Activated CD8-positive, alpha-beta T cell treated with anti-CD3 and anti-CD28 coated beads for 36 hours (primary cell): ENCODE measurements at regions of chr2 and their contacts with region 1.

Region 1: DNA sequence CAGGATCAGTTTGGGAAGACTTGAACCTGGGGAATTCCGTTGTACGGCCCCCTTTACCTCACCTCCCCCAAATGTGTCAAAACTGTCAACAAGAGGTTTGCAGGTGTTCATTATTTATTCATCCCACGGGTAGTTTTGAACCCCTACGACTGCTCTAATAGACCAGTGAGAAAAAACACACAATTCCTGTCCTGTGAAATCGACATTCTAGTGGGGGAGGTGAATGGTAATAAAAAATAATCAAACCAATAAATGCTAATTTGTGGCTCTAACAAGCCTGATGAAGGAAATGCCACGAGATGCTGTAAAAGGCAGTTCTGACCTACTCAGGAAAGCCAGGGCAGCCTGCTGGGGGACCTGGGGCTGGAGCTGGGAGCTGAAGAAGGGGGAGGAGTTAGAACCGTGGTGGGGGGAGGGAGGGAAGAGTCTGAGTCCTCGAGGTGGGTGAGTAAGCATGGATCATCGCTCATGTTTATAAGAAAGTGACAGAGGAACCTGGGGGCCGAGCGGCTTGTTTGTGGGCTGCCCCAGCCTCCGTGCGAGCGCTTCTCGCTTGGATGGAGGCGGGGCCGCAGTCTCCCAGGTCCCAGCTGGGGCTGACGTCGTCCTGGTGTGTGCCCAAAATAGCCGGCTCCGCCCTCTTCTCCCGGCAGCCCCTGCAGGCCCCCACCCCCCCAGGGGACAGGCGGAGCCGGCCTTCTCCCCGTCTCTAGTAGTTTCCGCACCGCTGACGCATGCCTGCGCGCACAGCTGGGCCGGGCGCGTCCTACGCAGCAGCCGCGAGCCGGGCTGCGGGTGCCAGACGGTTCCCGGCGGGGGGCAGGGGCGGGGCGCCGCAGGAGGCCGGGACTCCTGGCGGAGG is at the start of gene DNAJB2:
- DNase-seq: peak; percentile 100
- ATAC-seq: peak; percentile 86
- H3K4me3 Mint-ChIP-seq: peak within 1 kb of the TSS; percentile 80
- H3K27ac Mint-ChIP-seq: peak within 1 kb of the TSS; percentile 95
- H3K4me1 Mint-ChIP-seq: peaks cover 45% of the 10 kb centered on the region
- H3K27me3 Mint-ChIP-seq: no peaks in the 10 kb centered on the region
- CTCF ChIP-seq: no peak
- total RNA-seq, gene DNAJB2: 61.8 to 63.3 TPM

Region 2: DNA sequence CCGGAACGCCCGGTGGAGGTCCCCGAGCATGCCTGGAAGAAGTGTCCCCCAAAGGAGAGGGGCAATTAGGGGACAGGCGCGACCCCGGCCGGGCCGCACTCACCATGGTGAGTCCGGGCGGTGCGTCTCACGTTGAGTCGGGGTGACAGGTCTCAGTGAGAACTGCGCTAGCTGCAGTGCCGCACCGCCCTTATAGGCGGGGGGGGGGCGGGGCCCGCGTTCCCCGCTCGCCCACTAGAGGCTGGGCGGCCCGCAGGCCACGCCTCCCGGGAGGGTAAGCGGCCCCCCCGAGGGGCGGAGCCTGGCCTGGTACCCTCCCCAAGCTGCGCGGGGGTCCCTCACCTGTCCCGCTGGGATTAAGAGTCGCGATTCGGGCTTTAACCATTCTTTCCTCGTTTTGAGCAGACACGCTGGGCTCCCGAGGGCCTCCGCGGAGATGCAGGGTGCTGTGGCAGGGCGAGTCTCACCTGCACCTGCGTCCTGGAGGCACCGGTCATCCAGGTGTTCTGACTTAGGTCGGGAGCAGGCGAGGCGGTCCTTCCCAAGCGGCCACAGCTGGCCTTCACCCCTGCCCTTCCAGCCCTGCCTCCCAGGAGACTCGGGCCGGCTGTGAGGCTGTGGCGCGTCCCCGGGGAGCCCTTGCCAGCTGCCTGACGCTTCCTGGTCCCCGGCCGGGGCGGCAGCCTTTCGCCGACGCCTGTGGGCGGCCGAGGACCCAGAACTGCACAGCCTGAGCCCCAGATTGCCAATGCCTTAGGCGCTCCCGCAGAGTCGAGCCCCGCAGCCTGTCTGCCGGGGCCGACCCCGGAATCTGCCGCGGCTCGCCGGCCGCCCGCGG is 24.9 kb before region 1 on chr2 and contains the start of gene TUBA4A:
- CTCF ChIA-PET with region 1: interaction called, 132 read pairs
- POLR2A ChIA-PET with region 1: interaction called, 63 read pairs
- intact Hi-C with region 1: loop called (anchors 2 kb)
- DNase-seq: peak; percentile 92
- ATAC-seq: peak; percentile 73
- H3K4me3 Mint-ChIP-seq: peak within 1 kb of the TSS; percentile 77
- H3K27ac Mint-ChIP-seq: peak within 1 kb of the TSS; percentile 94
- H3K4me1 Mint-ChIP-seq: peaks cover 46% of the 10 kb centered on the region
- H3K27me3 Mint-ChIP-seq: no peaks in the 10 kb centered on the region
- CTCF ChIP-seq: no peak
- total RNA-seq, gene TUBA4A: 226 TPM

Region 3: DNA sequence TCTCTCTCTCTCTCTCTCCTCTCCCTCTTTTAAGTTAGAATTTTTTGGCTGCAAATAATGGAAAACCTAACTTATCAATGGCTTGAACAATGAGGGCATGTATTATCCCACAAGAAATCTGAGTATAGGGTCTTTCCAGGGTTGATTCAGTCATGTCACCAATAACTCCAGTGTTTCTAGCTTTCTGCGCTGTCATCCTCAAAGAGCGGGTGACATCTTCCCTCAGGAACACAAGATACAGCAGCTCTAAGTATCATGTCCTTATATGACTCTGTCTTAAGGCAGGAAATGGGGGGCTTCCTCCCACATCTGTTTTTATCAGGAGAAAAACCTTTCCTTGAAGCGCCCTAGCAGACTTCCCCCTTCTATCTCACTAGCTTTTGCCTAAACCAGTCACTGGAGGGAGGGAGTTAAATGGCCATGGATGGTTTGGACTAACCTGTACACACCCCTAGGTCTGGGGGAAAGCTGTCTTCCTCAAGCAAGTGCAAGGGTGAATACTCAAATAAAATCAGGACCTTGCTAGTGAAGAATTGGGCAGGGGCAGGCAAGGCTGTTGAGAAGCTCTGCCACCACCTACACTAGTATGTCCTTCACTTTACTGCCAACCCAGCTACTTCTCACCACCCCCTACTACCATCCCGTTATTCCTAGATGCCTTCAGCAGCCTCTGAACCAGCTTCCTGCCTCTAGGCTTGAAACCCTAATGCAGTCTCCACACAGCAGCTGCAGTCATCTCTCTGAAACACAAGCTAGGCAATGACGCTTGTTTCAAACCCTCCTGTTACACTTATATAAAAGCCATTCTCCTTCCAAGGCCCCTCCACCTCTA is 17.6 kb before region 1 on chr2:
- CTCF ChIA-PET with region 1: interaction called, 132 read pairs
- POLR2A ChIA-PET with region 1: interaction called, 63 read pairs
- intact Hi-C with region 1: no loop called
- DNase-seq: no peak
- ATAC-seq: peak; percentile 26
- H3K4me3 Mint-ChIP-seq: no peak overlapping the region
- H3K27ac Mint-ChIP-seq: no peak overlapping the region
- H3K4me1 Mint-ChIP-seq: peaks cover 11% of the 10 kb centered on the region
- H3K27me3 Mint-ChIP-seq: peaks cover 1% of the 10 kb centered on the region
- CTCF ChIP-seq: no peak

Region 4: GRCh38 chr2:219266886-219267285 is 12.0 kb before region 1 on chr2:
- CTCF ChIA-PET with region 1: interaction called, 61 read pairs
- POLR2A ChIA-PET with region 1: interaction called, 3 read pairs
- intact Hi-C with region 1: no loop called
- DNase-seq: no peak
- ATAC-seq: no peak
- H3K4me3 Mint-ChIP-seq: no peak overlapping the region
- H3K27ac Mint-ChIP-seq: no peak overlapping the region
- H3K4me1 Mint-ChIP-seq: no peaks in the 10 kb centered on the region
- H3K27me3 Mint-ChIP-seq: no peaks in the 10 kb centered on the region
- CTCF ChIP-seq: no peak